ENCODE measurements at regions of chr6 and their contacts with region 1.

Region 1: GRCh38 chr6:17493286-17493685 is 99.9 kb downstream of the CAP2 start:
- DNase-seq: peak; percentile 89
- H3K4me3 ChIP-seq: no peak overlapping the region
- H3K27ac ChIP-seq: peak overlapping the region; percentile 94
- H3K4me1 ChIP-seq: peaks cover 76% of the 10 kb centered on the region
- H3K27me3 ChIP-seq: no peaks in the 10 kb centered on the region
- CTCF ChIP-seq: no peak
- POLR2A ChIP-seq: no peak

Region 2: GRCh38 chr6:16216501-16217155 is 1276.7 kb before region 1 on chr6:
- CTCF ChIA-PET with region 1: no interaction called
- POLR2A ChIA-PET with region 1: no interaction called
- dilution Hi-C with region 1: no loop called
- intact Hi-C with region 1: loop called (anchors 10 kb)
- DNase-seq: peak; percentile 41
- H3K4me3 ChIP-seq: no peak overlapping the region
- H3K27ac ChIP-seq: peak overlapping the region; percentile 99
- H3K4me1 ChIP-seq: peaks cover 28% of the 10 kb centered on the region
- H3K27me3 ChIP-seq: no peaks in the 10 kb centered on the region
- CTCF ChIP-seq: no peak
- POLR2A ChIP-seq: no peak

Region 3: DNA sequence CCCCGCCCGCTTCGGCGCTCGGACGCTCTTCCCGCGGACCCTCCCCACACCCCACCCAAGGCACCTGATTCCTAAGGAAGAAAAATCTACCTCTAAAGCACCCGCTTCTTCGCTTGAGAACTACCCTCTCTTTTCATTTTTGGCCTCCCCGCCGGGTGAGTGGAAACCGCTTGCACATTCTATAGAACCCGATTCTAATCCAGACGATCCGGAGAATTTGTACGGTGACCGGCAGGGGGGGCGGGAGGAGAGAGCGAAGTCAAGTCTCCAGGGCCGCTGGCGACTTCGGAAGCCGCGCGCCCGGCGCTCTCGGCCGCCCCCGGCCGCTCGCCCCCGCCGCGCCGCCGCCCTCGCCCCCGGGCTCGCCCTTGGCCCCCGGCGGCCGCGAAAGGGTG is 212.2 kb before region 1 on chr6 and contains the start of gene RBM24:
- CTCF ChIA-PET with region 1: no interaction called
- POLR2A ChIA-PET with region 1: no interaction called
- dilution Hi-C with region 1: no loop called
- intact Hi-C with region 1: loop called (anchors 2 kb)
- DNase-seq: peak; percentile 57
- H3K4me3 ChIP-seq: peak within 1 kb of the TSS; percentile 49 to 80 (median 66)
- H3K27ac ChIP-seq: no peak within 1 kb of the TSS
- H3K4me1 ChIP-seq: peaks cover 15% of the 10 kb centered on the region
- H3K27me3 ChIP-seq: no peaks in the 10 kb centered on the region
- CTCF ChIP-seq: peak; percentile 14 to 54
- POLR2A ChIP-seq: no peak
- total RNA-seq, gene RBM24: 6.0 and 6.7 TPM in 2 replicates

Region 4: DNA sequence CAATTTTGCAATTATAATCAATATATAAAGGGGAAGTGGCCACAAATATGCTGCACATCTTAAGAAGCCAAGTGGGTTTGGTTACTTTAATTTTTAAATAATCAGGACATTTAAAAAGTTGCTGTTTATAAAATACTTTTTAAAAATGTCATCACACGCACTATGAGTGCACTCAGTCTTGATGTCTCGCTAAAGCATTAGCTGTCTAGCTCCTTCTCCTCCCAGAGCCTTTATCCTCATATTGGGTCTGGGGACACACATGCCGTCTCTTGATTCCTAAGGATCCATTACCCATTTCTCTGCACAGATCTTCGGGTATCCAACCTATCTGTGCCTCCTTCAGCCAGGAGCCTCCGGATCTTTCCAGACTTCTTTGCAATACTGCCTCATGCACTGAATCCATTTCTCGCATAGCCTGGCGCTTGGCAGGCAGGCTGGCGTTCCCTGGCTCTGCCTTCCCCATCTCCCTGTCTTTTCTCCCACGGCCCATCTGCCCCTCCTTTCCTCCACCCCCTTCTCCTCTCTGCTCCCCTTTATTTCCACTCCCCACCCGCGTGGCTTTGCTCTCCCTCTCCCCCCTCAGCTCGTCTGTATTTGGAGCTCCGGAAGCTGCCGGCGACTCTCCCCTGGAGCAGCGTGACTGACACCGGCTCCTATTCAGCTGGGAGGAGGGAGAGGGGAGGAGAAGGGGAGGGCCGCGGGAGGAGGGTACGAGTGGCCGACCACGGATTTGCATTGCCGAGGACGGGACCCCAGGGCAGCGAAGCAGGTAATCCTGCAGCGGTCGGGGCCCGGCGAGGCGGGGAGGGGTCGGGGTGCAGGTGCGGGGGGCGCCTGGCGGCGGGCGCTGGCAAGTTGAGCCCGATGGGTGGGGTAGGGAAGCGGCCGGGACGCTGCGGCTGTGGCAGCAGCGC is 100.1 kb before region 1 on chr6 and contains the start of gene CAP2:
- CTCF ChIA-PET with region 1: no interaction called
- POLR2A ChIA-PET with region 1: no interaction called
- dilution Hi-C with region 1: no loop called
- intact Hi-C with region 1: loop called (anchors 1 kb)
- DNase-seq: peak; percentile 48
- H3K4me3 ChIP-seq: peak within 1 kb of the TSS; percentile 66 to 94 (median 73)
- H3K27ac ChIP-seq: peak within 1 kb of the TSS; percentile 42
- H3K4me1 ChIP-seq: peaks cover 11% of the 10 kb centered on the region
- H3K27me3 ChIP-seq: no peaks in the 10 kb centered on the region
- CTCF ChIP-seq: no peak
- POLR2A ChIP-seq: no peak
- total RNA-seq, gene CAP2: 18.0 and 21.3 TPM in 2 replicates

Region 5: GRCh38 chr6:17469006-17469832 is 24.1 kb before region 1 on chr6:
- CTCF ChIA-PET with region 1: interaction called, 5 read pairs
- POLR2A ChIA-PET with region 1: interaction called, 4 read pairs
- dilution Hi-C with region 1: no loop called
- intact Hi-C with region 1: loop called (anchors 1 kb)
- DNase-seq: peak; percentile 85
- H3K4me3 ChIP-seq: no peak overlapping the region
- H3K27ac ChIP-seq: no peak overlapping the region
- H3K4me1 ChIP-seq: peaks cover 4% of the 10 kb centered on the region
- H3K27me3 ChIP-seq: no peaks in the 10 kb centered on the region
- CTCF ChIP-seq: peak; percentile 39 to 62
- POLR2A ChIP-seq: no peak

Region 6: GRCh38 chr6:17505062-17505476 is 11.8 kb after region 1 on chr6:
- CTCF ChIA-PET with region 1: interaction called, 27 read pairs
- POLR2A ChIA-PET with region 1: interaction called, 3 read pairs
- dilution Hi-C with region 1: no loop called
- intact Hi-C with region 1: no loop called
- DNase-seq: peak; percentile 25
- H3K4me3 ChIP-seq: no peak overlapping the region
- H3K27ac ChIP-seq: no peak overlapping the region
- H3K4me1 ChIP-seq: no peaks in the 10 kb centered on the region
- H3K27me3 ChIP-seq: no peaks in the 10 kb centered on the region
- CTCF ChIP-seq: peak; percentile 4 to 6
- POLR2A ChIP-seq: no peak